ENCODE measurements at regions of chr22 and their contacts with region 1.

Region 1: GRCh38 chr22:37643225-37643847 is 3.9 kb downstream of the SH3BP1 start:
- DNase-seq: peak; percentile 86 to 89
- H3K4me3 ChIP-seq: no peak overlapping the region
- H3K27ac ChIP-seq: no peak overlapping the region
- H3K4me1 ChIP-seq: peaks cover 0 to 14% of the 10 kb centered on the region in 2 donors
- H3K27me3 ChIP-seq: no peaks in the 10 kb centered on the region
- CTCF ChIP-seq: peak; percentile 87 to 93 (median 91)
- POLR2A ChIP-seq: no peak

Region 2: GRCh38 chr22:37519268-37520195 is 123.8 kb before region 1 on chr22 and contains the start of gene CARD10:
- intact Hi-C with region 1: no loop called
- DNase-seq: no peak
- H3K4me3 ChIP-seq: peak within 1 kb of the TSS; percentile 31 to 43
- H3K27ac ChIP-seq: peak within 1 kb of the TSS; percentile 34 to 53
- H3K4me1 ChIP-seq: peaks cover 0 to 18% of the 10 kb centered on the region in 2 donors
- H3K27me3 ChIP-seq: peaks cover 0 to 3% of the 10 kb centered on the region in 2 donors
- CTCF ChIP-seq: no peak
- POLR2A ChIP-seq: no peak
- total RNA-seq, gene CARD10: 4.6 to 23.4 (median 10.2) TPM

Region 3: DNA sequence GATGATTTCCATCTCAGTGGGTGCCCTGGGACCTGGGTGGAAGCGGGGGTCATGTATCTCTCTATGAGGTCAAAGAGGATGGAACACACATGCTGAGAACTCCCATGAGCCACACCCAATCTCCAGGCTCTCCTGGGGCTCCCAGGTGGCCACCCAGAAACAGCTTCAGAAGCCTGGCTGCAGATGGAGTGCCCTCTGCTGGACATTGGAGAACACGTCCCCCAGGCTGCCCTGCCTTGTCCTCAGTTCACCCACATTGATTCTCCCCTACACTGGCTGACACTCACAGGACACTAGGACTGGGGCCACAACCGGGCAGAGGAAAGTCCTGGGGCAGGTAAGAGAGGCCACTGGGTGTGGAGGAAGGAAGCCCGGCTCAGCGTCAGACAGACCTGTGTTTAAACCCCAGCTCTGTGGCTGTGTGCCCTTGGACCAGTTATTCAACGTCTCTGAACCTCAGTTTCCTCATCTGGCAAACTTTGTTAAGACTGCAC is 38.3 kb after region 1 on chr22:
- intact Hi-C with region 1: loop called (anchors 5 kb)
- DNase-seq: peak; percentile 76 to 77
- H3K4me3 ChIP-seq: no peak overlapping the region
- H3K27ac ChIP-seq: peak overlapping the region; percentile 6 to 43
- H3K4me1 ChIP-seq: peaks cover 3 to 16% of the 10 kb centered on the region in 2 donors
- H3K27me3 ChIP-seq: no peaks in the 10 kb centered on the region
- CTCF ChIP-seq: peak; percentile 85 to 89 (median 88)
- POLR2A ChIP-seq: no peak

Region 4: DNA sequence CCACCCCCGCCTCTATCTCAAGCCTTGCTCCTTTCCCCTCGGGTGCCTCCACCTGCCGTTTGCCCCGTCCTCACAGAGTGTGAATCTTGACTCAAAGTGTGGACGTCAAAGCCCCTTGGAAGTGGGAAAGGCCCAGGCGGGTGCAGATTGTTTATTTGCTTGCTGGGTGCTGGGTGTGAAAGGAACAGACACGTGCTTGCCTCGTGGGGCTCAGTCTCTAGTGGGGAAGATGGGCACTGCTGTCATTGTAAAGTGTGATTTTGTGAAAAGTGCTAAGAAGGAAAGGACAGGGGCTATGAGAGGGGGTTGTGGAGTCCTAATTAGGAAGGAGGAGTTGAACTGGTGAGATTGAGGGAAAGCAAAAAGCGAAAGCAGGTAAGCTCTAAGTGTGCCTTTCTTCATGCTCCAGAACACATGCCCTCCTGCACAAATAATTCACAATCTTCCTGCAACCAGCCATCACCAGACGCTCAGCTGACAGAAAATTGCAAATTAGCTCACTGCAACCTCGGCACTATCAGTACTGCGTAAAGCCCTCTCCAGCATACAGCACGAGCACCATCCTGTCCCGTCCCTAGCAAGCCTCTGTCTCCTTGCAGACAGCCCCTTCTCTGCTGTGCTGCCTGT is 154.7 kb after region 1 on chr22:
- intact Hi-C with region 1: loop called (anchors 10 kb)
- DNase-seq: no peak
- H3K4me3 ChIP-seq: no peak overlapping the region
- H3K27ac ChIP-seq: no peak overlapping the region
- H3K4me1 ChIP-seq: no peaks in the 10 kb centered on the region
- H3K27me3 ChIP-seq: no peaks in the 10 kb centered on the region
- CTCF ChIP-seq: no peak
- POLR2A ChIP-seq: no peak